ENCODE measurements at regions of chr1 and their contacts with region 1.

Region 1: GRCh38 chr1:154479764-154480421 is 22.1 kb upstream of the TDRD10 start:
- DNase-seq: peak; percentile 91

Region 2: GRCh38 chr1:154431586-154432373 is 48.1 kb before region 1 on chr1:
- CTCF ChIA-PET with region 1: no interaction called
- POLR2A ChIA-PET with region 1: no interaction called
- DNase-seq: no peak

Region 3: DNA sequence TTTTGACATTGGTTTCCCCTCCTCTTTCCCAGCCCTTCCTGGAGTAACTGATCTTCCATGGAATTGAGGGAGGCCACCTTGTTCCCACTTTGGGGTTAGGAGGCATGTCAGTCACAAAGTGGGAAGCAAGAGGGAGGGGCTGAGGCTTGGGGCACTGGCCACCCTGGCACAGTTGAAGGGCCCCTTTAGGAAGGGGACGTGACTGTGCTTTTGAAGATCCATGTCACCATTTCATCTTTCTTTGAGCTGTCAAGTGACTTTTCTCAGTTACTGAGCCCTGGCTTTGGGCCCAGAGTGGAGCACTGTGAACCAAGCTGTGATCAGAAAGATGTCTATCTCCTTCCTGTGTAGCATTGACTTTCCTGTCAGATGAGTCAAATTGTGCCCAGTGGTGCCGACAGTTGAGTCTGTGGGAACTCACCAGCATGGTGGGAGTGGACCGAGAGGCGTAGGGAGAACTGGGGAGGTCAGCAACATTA is 16.3 kb before region 1 on chr1:
- CTCF ChIA-PET with region 1: interaction called, 10 read pairs
- POLR2A ChIA-PET with region 1: no interaction called
- DNase-seq: no peak

Region 4: GRCh38 chr1:154501423-154502065 is 21.7 kb after region 1 on chr1:
- CTCF ChIA-PET with region 1: no interaction called
- POLR2A ChIA-PET with region 1: no interaction called
- DNase-seq: no peak

Region 5: GRCh38 chr1:154546264-154547063 is 66.6 kb after region 1 on chr1:
- CTCF ChIA-PET with region 1: interaction called, 47 read pairs
- POLR2A ChIA-PET with region 1: no interaction called
- DNase-seq: peak; percentile 89

Measured in HEK293T (cell line).